Activated naive CD4-positive, alpha-beta T cell treated with anti-CD3 and anti-CD28 coated beads for 36 hours (primary cell): ENCODE measurements at regions of chr5 and their contacts with region 1.

Region 1: DNA sequence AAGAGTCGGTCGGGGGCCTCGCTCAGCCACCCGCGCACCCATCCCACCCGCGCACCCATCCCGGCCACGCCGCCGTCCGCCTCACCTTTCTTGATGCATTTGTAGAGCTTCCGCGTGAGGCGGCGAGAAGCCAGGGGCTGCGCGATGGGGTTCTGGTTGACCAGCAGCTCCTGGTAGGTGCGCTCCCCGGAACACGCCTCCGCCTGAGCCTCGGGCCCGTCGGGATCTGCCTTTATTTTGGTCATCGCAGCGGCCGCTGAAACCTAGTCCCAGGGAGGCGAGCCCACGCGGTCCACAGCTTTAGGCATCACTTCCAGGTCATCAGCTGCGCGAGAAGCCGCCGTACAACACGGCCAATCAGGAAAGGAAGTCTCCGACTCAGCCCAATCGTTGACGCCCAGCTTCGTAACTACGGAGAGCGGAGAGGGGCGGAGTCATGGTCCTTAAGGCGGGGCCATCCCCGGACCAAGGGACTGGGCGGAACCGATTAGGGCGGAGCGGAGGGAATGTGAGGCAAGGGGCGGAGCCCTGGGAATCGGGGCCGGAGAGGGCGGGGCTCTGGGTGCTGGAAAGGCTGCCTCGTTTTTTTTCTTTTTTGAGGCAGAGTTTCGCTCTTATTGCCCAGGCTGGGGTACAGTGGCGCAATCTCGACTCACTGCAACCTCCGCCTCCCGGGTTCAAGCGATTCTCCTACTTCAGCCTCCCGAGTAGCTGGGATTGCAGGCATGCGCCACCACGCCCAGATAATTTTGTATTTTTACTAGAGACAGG is at the start of gene NHP2:
- DNase-seq: peak; percentile 99
- H3K4me3 Mint-ChIP-seq: peak within 1 kb of the TSS; percentile 96
- H3K27ac Mint-ChIP-seq: peak within 1 kb of the TSS; percentile 81
- H3K4me1 Mint-ChIP-seq: peaks cover 45% of the 10 kb centered on the region
- H3K27me3 Mint-ChIP-seq: no peaks in the 10 kb centered on the region
- total RNA-seq, gene NHP2: 289 to 298 TPM

Region 2: GRCh38 chr5:177592010-177592834 is 561.5 kb before region 1 on chr5 and contains the start of gene TMED9:
- CTCF ChIA-PET with region 1: no interaction called
- intact Hi-C with region 1: loop called (anchors 10 kb)
- DNase-seq: peak; percentile 88
- H3K4me3 Mint-ChIP-seq: peak within 1 kb of the TSS; percentile 98
- H3K27ac Mint-ChIP-seq: peak within 1 kb of the TSS; percentile 94
- H3K4me1 Mint-ChIP-seq: peaks cover 35% of the 10 kb centered on the region
- H3K27me3 Mint-ChIP-seq: peaks cover 9% of the 10 kb centered on the region
- total RNA-seq, gene TMED9: 110 TPM

Region 3: GRCh38 chr5:178063277-178063676 is 90.5 kb before region 1 on chr5:
- CTCF ChIA-PET with region 1: no interaction called
- intact Hi-C with region 1: no loop called
- DNase-seq: no peak
- H3K4me3 Mint-ChIP-seq: no peak overlapping the region
- H3K27ac Mint-ChIP-seq: no peak overlapping the region
- H3K4me1 Mint-ChIP-seq: peaks cover 5% of the 10 kb centered on the region
- H3K27me3 Mint-ChIP-seq: no peaks in the 10 kb centered on the region

Region 4: GRCh38 chr5:178113199-178113787 is 40.5 kb before region 1 on chr5 and contains the start of gene N4BP3:
- CTCF ChIA-PET with region 1: no interaction called
- intact Hi-C with region 1: loop called (anchors 5 kb)
- DNase-seq: peak; percentile 88
- H3K4me3 Mint-ChIP-seq: peak within 1 kb of the TSS; percentile 88
- H3K27ac Mint-ChIP-seq: no peak within 1 kb of the TSS
- H3K4me1 Mint-ChIP-seq: peaks cover 31% of the 10 kb centered on the region
- H3K27me3 Mint-ChIP-seq: no peaks in the 10 kb centered on the region
- total RNA-seq, gene N4BP3: 1.4 to 1.6 TPM

Region 5: DNA sequence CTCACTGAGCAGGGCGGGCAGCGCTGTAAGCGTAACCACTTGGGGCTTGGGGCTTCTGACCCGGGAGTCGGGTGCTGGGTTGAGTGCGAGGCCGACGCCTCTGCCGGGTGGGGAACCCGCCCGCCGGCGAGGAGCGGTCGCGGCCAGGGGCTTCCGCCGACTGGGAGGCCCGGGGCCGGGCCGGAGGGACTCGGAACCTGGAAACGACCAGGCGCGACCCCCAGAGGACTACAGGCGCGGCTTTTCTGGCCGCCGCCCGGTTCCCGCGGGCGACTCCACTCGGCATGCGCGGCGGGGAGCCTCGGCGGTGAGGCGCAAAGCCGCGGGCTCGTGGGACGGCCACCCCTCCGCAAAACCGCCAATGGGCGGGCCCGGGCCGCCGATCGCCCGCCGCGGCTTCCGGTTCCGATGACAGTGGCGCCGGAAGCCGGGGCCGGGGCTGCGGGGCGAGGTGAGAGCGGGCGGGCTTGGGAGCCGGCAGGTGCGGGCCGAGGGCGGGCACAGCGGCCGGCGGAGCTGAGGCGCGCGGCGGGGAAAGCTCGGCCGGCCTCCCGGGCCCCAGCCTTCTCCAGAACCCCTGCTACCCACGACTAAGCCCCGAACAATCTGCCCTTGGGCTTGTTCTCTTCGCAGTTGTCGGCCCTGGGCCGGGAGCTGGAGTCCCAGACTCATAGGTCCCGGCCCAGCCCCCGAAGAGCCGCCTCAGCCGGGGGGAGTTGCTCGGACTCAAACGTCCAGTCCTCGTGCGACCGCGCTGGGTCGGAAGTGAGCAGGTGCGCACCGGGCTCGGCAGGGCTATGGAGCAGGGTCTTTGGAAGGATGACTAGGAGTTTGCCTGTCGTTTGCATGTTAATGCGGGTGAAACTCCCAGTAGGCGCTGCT is 22.9 kb before region 1 on chr5 and contains the start of gene RMND5B:
- CTCF ChIA-PET with region 1: no interaction called
- intact Hi-C with region 1: loop called (anchors 1 kb)
- DNase-seq: peak; percentile 85
- H3K4me3 Mint-ChIP-seq: peak within 1 kb of the TSS; percentile 85
- H3K27ac Mint-ChIP-seq: peak within 1 kb of the TSS; percentile 84
- H3K4me1 Mint-ChIP-seq: peaks cover 30% of the 10 kb centered on the region
- H3K27me3 Mint-ChIP-seq: no peaks in the 10 kb centered on the region
- total RNA-seq, gene RMND5B: 26.0 to 26.7 TPM

Region 6: DNA sequence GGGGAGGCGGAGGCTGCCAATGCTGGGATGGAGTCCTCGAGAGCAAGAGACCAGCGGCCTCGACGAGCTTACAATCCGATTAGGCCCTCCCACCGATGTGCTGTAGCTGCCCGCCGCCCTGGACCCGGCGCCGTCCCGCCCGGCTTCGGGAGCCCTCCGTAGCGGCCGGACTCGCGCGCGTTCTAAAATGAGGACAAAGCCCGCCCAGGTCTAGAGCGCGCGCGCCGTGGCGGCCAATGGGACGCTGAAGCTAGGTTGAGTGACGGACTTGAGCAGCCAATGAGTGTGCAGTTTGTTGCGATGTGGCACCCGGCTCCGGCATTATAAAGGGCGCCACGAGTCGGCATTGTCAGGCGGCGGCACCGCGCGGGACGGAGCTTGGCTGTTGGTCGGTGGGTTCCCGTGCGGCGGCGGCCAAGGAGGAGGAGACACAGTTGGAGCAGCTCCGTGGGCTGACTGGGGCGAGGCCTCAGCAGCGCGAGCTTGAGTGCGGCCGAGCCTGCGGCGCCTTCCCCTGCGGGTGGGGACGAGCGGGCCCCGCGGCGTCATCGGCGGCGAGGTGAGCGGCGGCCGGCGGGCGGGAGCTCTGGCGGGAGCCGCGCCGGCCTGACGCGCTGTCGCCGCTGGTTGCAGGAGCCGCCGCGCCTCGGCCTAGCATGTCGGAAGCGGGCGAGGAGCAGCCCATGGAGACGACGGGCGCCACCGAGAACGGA is 50.6 kb after region 1 on chr5 and contains the start of gene HNRNPAB:
- CTCF ChIA-PET with region 1: no interaction called
- intact Hi-C with region 1: loop called (anchors 2 kb)
- DNase-seq: peak; percentile 96
- H3K4me3 Mint-ChIP-seq: peak within 1 kb of the TSS; percentile 96
- H3K27ac Mint-ChIP-seq: peak within 1 kb of the TSS; percentile 97
- H3K4me1 Mint-ChIP-seq: peaks cover 31% of the 10 kb centered on the region
- H3K27me3 Mint-ChIP-seq: peaks cover 2% of the 10 kb centered on the region
- total RNA-seq, gene HNRNPAB: 251 to 262 TPM